ENCODE measurements at regions of chr3 and their contacts with region 1.

Region 1: GRCh38 chr3:102229062-102229655 is 205.7 kb upstream of the ZPLD1 start:
- DNase-seq: peak; percentile 40 to 69
- ATAC-seq: peak in 6 of 8 donors; percentile 43 to 83 (median 77)
- H3K4me3 ChIP-seq: no peak overlapping the region
- H3K27ac ChIP-seq: no peak overlapping the region
- H3K4me1 ChIP-seq: peaks cover 0 to 10% (median 0%) of the 10 kb centered on the region in 9 donors
- H3K27me3 ChIP-seq: peaks cover 0 to 3% (median 0%) of the 10 kb centered on the region in 7 donors
- CTCF ChIP-seq: peak; percentile 86 to 97 (median 94)

Region 2: DNA sequence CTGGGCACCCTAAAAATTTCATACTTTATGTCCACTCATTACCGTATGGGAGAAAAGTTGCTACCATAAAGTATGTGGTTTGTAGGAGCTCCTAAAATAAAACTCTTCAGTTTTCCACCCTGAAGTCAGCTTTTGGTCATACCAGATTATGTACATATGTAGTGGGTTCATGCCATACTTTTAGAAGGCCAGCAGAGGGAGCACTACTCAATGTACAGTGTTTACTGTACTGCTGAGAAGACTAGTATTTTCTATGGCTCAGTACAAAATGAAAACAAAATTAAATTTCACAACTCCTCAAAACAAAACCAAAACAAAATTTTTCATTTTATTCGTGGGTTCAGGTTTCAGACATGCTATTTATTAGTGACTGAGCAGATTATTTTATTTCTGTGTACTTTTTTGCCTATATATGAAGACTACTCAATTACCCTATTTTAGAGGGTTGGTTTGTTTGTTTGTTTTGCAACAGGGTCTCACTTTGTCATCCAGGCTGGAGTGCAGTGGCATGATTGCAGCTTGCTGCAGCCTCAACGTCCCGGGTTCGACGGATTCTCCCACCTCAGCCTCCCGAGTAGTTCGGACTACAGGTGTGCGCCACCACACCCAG is 425.9 kb before region 1 on chr3:
- intact Hi-C with region 1: loop called in 3 of 10 experiments (anchors 2 kb)
- DNase-seq: peak in 1 of 2 donors; percentile 75
- ATAC-seq: peak; percentile 87 to 96 (median 92)
- H3K4me3 ChIP-seq: no peak overlapping the region
- H3K27ac ChIP-seq: no peak overlapping the region
- H3K4me1 ChIP-seq: peaks cover 0 to 10% (median 0%) of the 10 kb centered on the region in 9 donors
- H3K27me3 ChIP-seq: no peaks in the 10 kb centered on the region
- CTCF ChIP-seq: peak; percentile 77 to 92 (median 88)

Region 3: GRCh38 chr3:101809178-101810021 is 419.8 kb before region 1 on chr3:
- intact Hi-C with region 1: loop called (anchors 1 to 5 kb)
- DNase-seq: no peak
- ATAC-seq: peak in 4 of 8 donors; percentile 41 to 64 (median 57)
- H3K4me3 ChIP-seq: no peak overlapping the region
- H3K27ac ChIP-seq: peak overlapping the region in 2 of 10 donors; percentile 18 to 41
- H3K4me1 ChIP-seq: peaks cover 0 to 28% (median 18%) of the 10 kb centered on the region in 9 donors
- H3K27me3 ChIP-seq: no peaks in the 10 kb centered on the region
- CTCF ChIP-seq: peak; percentile 32 to 81 (median 70)

Region 4: GRCh38 chr3:102151935-102152334 is 77.2 kb before region 1 on chr3:
- intact Hi-C with region 1: loop called in 1 of 10 experiments (anchors 2 kb)
- DNase-seq: no peak
- ATAC-seq: no peak
- H3K4me3 ChIP-seq: no peak overlapping the region
- H3K27ac ChIP-seq: no peak overlapping the region
- H3K4me1 ChIP-seq: no peaks in the 10 kb centered on the region
- H3K27me3 ChIP-seq: no peaks in the 10 kb centered on the region
- CTCF ChIP-seq: no peak

Region 5: DNA sequence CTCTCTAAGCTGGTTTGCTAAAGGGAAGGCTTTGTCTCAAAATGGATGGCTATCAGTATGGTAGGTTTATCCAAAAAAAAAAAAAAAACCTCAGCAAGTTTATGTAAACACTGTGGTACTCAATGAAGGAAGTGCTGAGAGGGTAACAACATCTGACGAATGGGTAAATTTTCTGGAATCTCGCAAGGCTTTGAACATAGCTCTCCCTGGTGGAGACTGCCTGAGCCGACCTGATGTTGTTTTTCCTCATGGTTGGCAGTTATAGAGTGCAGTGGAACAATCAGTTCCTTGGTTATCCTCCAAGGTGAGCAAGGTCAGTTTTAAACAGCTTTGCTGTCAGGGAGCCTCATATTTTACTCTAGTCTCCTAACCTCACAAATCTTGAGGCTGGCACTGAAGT is 300.3 kb after region 1 on chr3:
- intact Hi-C with region 1: loop called in 5 of 10 experiments (anchors 1 to 5 kb)
- DNase-seq: no peak
- ATAC-seq: peak in 6 of 8 donors; percentile 39 to 76 (median 52)
- H3K4me3 ChIP-seq: no peak overlapping the region
- H3K27ac ChIP-seq: no peak overlapping the region
- H3K4me1 ChIP-seq: no peaks in the 10 kb centered on the region
- H3K27me3 ChIP-seq: no peaks in the 10 kb centered on the region
- CTCF ChIP-seq: peak in 6 of 9 donors; percentile 20 to 44 (median 36)

Region 6: GRCh38 chr3:102536456-102536855 is 307.3 kb after region 1 on chr3:
- intact Hi-C with region 1: loop called (anchors 1 to 5 kb)
- DNase-seq: no peak
- ATAC-seq: peak in 1 of 8 donors; percentile 45
- H3K4me3 ChIP-seq: no peak overlapping the region
- H3K27ac ChIP-seq: no peak overlapping the region
- H3K4me1 ChIP-seq: no peaks in the 10 kb centered on the region
- H3K27me3 ChIP-seq: peaks cover 0 to 8% (median 0%) of the 10 kb centered on the region in 7 donors
- CTCF ChIP-seq: peak in 7 of 9 donors; percentile 33 to 59 (median 49)